Right ventricle myocardium inferior (tissue), 1 donor: ENCODE measurements at regions of chr6 and their contacts with region 1.

Region 1: GRCh38 chr6:85593438-85594196 is at the start of gene SNX14:
- DNase-seq: peak; percentile 98
- ATAC-seq: peak; percentile 99
- total RNA-seq, gene SNX14: 24.3 TPM

Region 2: DNA sequence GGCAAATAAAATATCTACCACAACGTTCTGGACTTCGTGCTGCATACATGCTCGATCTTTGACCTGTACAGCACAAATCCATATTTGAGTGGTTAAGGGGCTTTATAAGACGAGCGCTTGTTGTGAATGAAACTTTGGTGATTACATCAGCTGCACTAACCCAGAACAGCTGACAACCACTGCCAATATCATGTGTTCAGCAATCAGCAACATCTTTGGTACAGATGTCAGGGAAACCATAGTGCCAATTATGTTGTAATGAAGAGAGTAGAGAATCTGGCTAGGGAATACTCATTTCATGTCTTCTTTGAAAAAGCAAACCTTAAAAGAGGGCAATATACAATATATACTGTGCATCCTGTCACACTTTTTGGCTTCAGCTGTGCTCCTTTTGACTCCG is 332.3 kb before region 1 on chr6:
- intact Hi-C with region 1: no loop called
- DNase-seq: no peak
- ATAC-seq: peak; percentile 75

Region 3: DNA sequence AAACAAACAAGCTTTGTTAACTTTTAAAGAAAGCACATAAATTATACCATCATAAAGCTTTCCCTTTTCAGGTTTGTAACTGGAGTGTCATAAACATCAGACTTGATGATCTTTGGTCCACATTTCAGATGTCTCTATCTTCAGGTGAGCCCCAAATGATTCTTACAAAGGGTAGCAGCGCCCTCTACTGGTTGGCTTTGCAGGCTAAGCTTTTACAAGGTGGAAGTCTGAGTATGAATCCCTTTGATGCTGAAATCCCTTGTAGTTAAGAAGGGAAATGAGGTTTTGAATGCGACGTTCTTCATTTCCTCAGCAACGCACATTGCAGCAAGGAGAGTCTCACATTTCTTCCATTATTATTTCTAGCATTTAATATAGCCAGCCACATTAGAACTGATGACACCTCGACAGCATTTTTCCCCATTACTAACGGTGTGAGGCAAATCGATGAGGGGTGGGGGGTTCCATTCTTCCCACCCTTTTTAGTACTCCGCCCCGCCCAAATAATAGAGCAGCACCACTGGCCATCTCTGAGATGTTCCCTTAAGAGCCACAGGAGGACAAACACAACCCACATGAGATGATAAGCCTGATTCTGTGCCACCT is 270.1 kb before region 1 on chr6:
- intact Hi-C with region 1: no loop called
- DNase-seq: no peak
- ATAC-seq: no peak

Region 4: GRCh38 chr6:85678602-85679444 is 85.2 kb after region 1 on chr6:
- intact Hi-C with region 1: loop called (anchors 1 kb)
- DNase-seq: peak; percentile 99
- ATAC-seq: peak; percentile 99